ENCODE measurements at regions of chr5 and their contacts with region 1.

Region 1: GRCh38 chr5:11384441-11385250 is 519.6 kb downstream of the CTNND2 start:
- DNase-seq: peak; percentile 36 to 88 (median 70)

Region 2: DNA sequence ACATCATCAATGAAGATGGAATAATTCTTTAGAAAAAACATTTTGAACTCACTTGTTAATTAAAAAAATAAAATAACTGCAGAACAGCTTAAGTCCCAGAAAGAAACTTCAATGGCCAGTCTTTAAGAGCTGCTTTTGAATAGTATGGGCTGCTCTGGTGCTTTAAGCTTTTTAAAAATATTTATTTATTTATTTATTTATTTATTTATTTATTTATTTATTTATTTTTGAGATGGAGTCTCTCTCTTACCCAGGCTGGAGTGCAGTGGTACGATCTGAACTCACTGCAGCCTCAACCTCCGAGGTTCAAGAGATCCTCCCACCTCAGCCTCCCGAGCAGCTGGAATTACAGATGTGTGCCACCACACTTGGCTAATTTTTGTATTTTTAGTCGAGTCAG is 107.3 kb before region 1 on chr5:
- intact Hi-C with region 1: loop called (anchors 5 kb)
- DNase-seq: no peak

Region 3: GRCh38 chr5:11494340-11494739 is 109.7 kb after region 1 on chr5:
- intact Hi-C with region 1: loop called (anchors 10 kb)
- DNase-seq: peak in 1 of 42 donors; percentile 26

Region 4: DNA sequence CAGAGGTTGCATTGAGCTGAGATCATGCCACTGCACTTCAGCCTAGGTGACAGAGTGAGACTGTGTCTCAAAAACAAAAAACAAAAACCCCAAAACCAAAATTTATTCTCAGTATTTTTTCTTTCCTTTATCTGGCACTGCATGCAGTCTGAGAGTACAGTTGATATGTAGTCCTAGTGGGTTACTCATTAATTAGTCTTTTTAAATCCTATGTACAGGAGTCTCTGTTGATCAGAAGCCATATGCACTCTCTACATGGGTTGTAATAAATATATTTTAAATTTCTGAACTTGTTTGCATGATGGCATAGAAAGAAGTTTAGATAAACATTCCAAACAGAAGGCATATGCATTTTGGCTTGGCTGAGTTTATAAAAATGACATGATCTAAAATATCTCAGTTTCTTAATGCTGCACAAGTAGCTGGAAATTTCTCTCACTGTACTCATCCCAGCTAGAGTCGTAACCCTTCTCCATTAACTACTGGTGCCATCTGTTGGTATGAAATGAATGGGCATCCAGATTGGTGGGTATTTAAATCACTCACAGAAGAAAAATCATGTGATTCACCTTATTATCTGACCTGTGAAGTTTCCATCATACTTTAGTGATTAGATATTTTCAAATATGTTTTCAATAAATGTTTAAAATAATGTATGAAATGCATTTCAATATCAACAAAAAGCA is 234.8 kb after region 1 on chr5:
- intact Hi-C with region 1: loop called (anchors 10 kb)
- DNase-seq: peak in 8 of 42 donors; percentile 25 to 73 (median 48)

Measured in head of caudate nucleus (tissue), 42 donors.